CD4-positive, alpha-beta T cell (primary cell): ENCODE measurements at regions of chr12 and their contacts with region 1.

Region 1: GRCh38 chr12:68223083-68223747 is 2.4 kb downstream of the IL26 start:
- DNase-seq: peak; percentile 48 to 89 (median 60)
- ATAC-seq: peak; percentile 97
- H3K4me3 ChIP-seq: no peak overlapping the region
- H3K4me3 Mint-ChIP-seq: peak overlapping the region; percentile 72
- H3K27ac ChIP-seq: no peak overlapping the region
- H3K27ac Mint-ChIP-seq: no peak overlapping the region
- H3K4me1 ChIP-seq: peaks cover 6% of the 10 kb centered on the region
- H3K4me1 Mint-ChIP-seq: peaks cover 6% of the 10 kb centered on the region
- H3K27me3 ChIP-seq: no peaks in the 10 kb centered on the region
- H3K27me3 Mint-ChIP-seq: no peaks in the 10 kb centered on the region
- CTCF ChIP-seq: peak; percentile 87

Region 2: GRCh38 chr12:68040450-68041075 is 182.7 kb before region 1 on chr12:
- CTCF ChIA-PET with region 1: no interaction called
- POLR2A ChIA-PET with region 1: no interaction called
- intact Hi-C with region 1: loop called (anchors 2 to 10 kb)
- DNase-seq: peak; percentile 35 to 84 (median 52)
- ATAC-seq: peak; percentile 90
- H3K4me3 ChIP-seq: no peak overlapping the region
- H3K4me3 Mint-ChIP-seq: no peak overlapping the region
- H3K27ac ChIP-seq: no peak overlapping the region
- H3K27ac Mint-ChIP-seq: no peak overlapping the region
- H3K4me1 ChIP-seq: peaks cover 4% of the 10 kb centered on the region
- H3K4me1 Mint-ChIP-seq: peaks cover 5% of the 10 kb centered on the region
- H3K27me3 ChIP-seq: no peaks in the 10 kb centered on the region
- H3K27me3 Mint-ChIP-seq: no peaks in the 10 kb centered on the region
- CTCF ChIP-seq: peak; percentile 97

Region 3: DNA sequence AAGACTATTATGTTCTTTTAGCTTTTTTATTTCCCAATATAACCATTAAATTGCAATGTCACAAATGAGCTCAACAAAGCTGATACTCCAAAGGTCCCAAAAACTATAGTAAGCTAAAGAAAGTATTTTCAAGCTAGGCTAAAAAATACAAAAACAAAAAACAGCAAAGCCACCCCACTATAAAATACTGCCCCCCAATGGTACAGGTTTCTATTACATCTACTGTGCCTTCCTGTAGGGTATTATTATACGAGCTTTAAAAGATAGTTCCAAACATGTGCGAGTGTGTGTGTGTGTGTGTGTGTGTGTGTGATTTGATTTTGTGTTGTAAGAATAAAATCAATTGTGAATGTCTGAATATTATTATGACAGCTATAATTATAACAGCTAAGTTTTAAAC is 64.8 kb before region 1 on chr12:
- CTCF ChIA-PET with region 1: interaction called, 12 read pairs
- POLR2A ChIA-PET with region 1: no interaction called
- intact Hi-C with region 1: no loop called
- DNase-seq: peak in 4 of 14 experiments; percentile 7 to 76 (median 71)
- ATAC-seq: peak; percentile 73
- H3K4me3 ChIP-seq: peak overlapping the region; percentile 38
- H3K4me3 Mint-ChIP-seq: peak overlapping the region; percentile 20
- H3K27ac ChIP-seq: no peak overlapping the region
- H3K27ac Mint-ChIP-seq: no peak overlapping the region
- H3K4me1 ChIP-seq: peaks cover 6% of the 10 kb centered on the region
- H3K4me1 Mint-ChIP-seq: peaks cover 18% of the 10 kb centered on the region
- H3K27me3 ChIP-seq: no peaks in the 10 kb centered on the region
- H3K27me3 Mint-ChIP-seq: no peaks in the 10 kb centered on the region
- CTCF ChIP-seq: peak; percentile 54

Region 4: GRCh38 chr12:68175557-68176061 is 47.6 kb before region 1 on chr12:
- CTCF ChIA-PET with region 1: interaction called, 3 read pairs
- POLR2A ChIA-PET with region 1: interaction called, 7 read pairs
- intact Hi-C with region 1: loop called in 1 of 2 experiments (anchors 2 kb)
- DNase-seq: peak; percentile 34 to 92 (median 48)
- ATAC-seq: peak; percentile 90
- H3K4me3 ChIP-seq: peak overlapping the region; percentile 43
- H3K4me3 Mint-ChIP-seq: peak overlapping the region; percentile 60
- H3K27ac ChIP-seq: peak overlapping the region; percentile 79 to 86
- H3K27ac Mint-ChIP-seq: peak overlapping the region; percentile 91
- H3K4me1 ChIP-seq: peaks cover 33% of the 10 kb centered on the region
- H3K4me1 Mint-ChIP-seq: peaks cover 63% of the 10 kb centered on the region
- H3K27me3 ChIP-seq: no peaks in the 10 kb centered on the region
- H3K27me3 Mint-ChIP-seq: no peaks in the 10 kb centered on the region
- CTCF ChIP-seq: no peak

Region 5: DNA sequence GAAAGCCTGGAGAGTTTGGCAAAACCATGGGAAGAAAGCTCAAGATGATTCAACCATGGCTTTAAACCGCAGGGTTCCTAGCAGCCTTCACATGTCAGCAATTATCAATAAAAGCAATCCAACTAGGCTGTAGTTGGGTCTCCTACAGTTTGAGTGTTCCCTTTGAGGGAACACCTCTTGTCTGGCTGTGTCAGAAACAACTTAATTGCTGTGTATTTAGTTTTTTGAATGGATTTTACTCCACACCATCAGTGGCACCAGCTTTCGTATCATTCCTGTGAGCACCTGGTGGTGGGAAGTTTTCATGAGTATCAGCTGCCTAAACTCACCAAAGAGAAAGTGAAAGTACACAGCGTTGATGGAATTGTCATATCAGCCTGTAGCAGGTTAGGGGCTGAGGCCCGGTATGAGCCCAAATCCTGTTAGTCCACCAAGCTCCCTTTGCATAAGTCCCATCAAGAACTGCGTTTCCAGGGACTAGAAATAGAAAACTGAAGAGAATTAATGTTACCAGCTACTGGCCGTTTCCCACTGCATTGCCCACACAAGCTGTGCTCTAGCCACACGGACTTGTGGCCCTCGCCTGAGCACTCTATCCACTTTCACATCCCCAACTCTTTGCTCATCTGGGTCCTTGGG is 13.3 kb after region 1 on chr12:
- CTCF ChIA-PET with region 1: interaction called, 15 read pairs
- POLR2A ChIA-PET with region 1: interaction called, 13 read pairs
- intact Hi-C with region 1: no loop called
- DNase-seq: peak; percentile 4 to 85 (median 14)
- ATAC-seq: peak; percentile 79
- H3K4me3 ChIP-seq: peak overlapping the region; percentile 56
- H3K4me3 Mint-ChIP-seq: peak overlapping the region; percentile 92
- H3K27ac ChIP-seq: peak overlapping the region; percentile 0 to 50
- H3K27ac Mint-ChIP-seq: peak overlapping the region; percentile 89
- H3K4me1 ChIP-seq: peaks cover 29% of the 10 kb centered on the region
- H3K4me1 Mint-ChIP-seq: peaks cover 61% of the 10 kb centered on the region
- H3K27me3 ChIP-seq: no peaks in the 10 kb centered on the region
- H3K27me3 Mint-ChIP-seq: no peaks in the 10 kb centered on the region
- CTCF ChIP-seq: no peak

Region 6: GRCh38 chr12:68317047-68317667 is 93.9 kb after region 1 on chr12:
- CTCF ChIA-PET with region 1: interaction called, 26 read pairs
- POLR2A ChIA-PET with region 1: interaction called, 3 read pairs
- intact Hi-C with region 1: loop called (anchors 1 kb)
- DNase-seq: peak in 10 of 14 experiments; percentile 16 to 79 (median 24)
- ATAC-seq: no peak
- H3K4me3 ChIP-seq: no peak overlapping the region
- H3K4me3 Mint-ChIP-seq: no peak overlapping the region
- H3K27ac ChIP-seq: no peak overlapping the region
- H3K27ac Mint-ChIP-seq: no peak overlapping the region
- H3K4me1 ChIP-seq: no peaks in the 10 kb centered on the region
- H3K4me1 Mint-ChIP-seq: no peaks in the 10 kb centered on the region
- H3K27me3 ChIP-seq: no peaks in the 10 kb centered on the region
- H3K27me3 Mint-ChIP-seq: no peaks in the 10 kb centered on the region
- CTCF ChIP-seq: peak; percentile 86

Region 7: DNA sequence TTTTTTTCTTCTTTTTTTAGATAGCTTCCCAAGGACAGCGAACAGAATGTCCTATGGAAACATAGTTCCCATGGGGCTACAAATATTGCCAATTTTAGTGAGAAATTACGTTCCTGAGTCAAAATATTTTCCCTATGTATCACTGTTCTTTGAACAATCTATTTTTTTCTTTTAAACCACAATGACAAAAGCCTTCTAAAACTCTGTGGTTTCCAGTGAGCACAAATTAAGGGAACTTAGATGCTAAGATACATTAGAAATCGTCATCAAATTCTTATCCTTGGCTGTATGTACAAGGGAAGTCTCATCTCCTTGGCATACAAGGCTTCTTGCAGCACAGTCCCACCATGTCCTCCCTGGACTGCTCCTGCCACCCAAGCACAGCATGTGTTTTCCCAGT is 691.8 kb after region 1 on chr12:
- CTCF ChIA-PET with region 1: no interaction called
- POLR2A ChIA-PET with region 1: no interaction called
- intact Hi-C with region 1: no loop called
- DNase-seq: no peak
- ATAC-seq: no peak
- H3K4me3 ChIP-seq: no peak overlapping the region
- H3K4me3 Mint-ChIP-seq: no peak overlapping the region
- H3K27ac ChIP-seq: no peak overlapping the region
- H3K27ac Mint-ChIP-seq: no peak overlapping the region
- H3K4me1 ChIP-seq: no peaks in the 10 kb centered on the region
- H3K4me1 Mint-ChIP-seq: peaks cover 6% of the 10 kb centered on the region
- H3K27me3 ChIP-seq: no peaks in the 10 kb centered on the region
- H3K27me3 Mint-ChIP-seq: no peaks in the 10 kb centered on the region
- CTCF ChIP-seq: no peak

Region 8: GRCh38 chr12:69070319-69071090 is 847.3 kb after region 1 on chr12:
- CTCF ChIA-PET with region 1: no interaction called
- POLR2A ChIA-PET with region 1: no interaction called
- intact Hi-C with region 1: loop called in 1 of 2 experiments (anchors 5 kb)
- DNase-seq: peak; percentile 23 to 74 (median 44)
- ATAC-seq: peak; percentile 71
- H3K4me3 ChIP-seq: no peak overlapping the region
- H3K4me3 Mint-ChIP-seq: no peak overlapping the region
- H3K27ac ChIP-seq: no peak overlapping the region
- H3K27ac Mint-ChIP-seq: no peak overlapping the region
- H3K4me1 ChIP-seq: no peaks in the 10 kb centered on the region
- H3K4me1 Mint-ChIP-seq: no peaks in the 10 kb centered on the region
- H3K27me3 ChIP-seq: peaks cover 0 to 4% of the 10 kb centered on the region in 2 experiments
- H3K27me3 Mint-ChIP-seq: peaks cover 20% of the 10 kb centered on the region
- CTCF ChIP-seq: peak; percentile 85